PC-3 (cell line): ENCODE measurements at regions of chr1 and their contacts with region 1.

Region 1: DNA sequence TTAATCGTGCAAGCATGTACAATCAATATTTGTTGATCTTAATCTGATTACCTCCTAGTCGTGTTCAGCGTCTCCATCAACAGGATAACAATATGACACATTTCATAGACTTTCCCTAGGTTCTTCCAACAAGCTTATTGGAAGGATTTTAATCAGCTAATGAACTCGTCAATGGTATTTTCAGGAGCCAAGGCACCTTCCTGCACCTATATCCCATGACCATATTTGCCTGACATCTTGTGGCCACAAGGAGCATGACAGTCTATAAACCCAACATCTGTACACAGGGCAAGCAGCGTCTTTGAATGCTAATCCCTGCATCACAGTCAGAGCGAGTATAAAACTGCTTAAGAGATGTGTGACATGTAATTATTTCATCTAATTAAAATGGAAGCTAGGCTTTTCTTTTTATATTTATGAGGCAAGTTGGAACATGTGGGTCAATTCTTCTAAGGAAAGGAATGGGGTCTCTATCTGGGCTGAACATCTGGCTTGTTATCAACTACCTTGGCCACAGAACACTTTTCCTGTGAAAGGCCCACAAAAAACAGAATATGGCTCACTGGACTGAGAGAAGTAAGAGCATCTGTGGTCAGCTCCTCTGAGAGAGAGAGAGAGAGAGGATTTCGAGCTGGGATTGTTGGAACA is 388.8 kb downstream of the NTNG1 start:
- DNase-seq: peak; percentile 68
- ATAC-seq: peak; percentile 75
- H3K4me3 ChIP-seq: no peak overlapping the region
- H3K27ac ChIP-seq: peak overlapping the region; percentile 49
- H3K4me1 ChIP-seq: peaks cover 26% of the 10 kb centered on the region
- H3K27me3 ChIP-seq: no peaks in the 10 kb centered on the region
- CTCF ChIP-seq: peak; percentile 91

Region 2: GRCh38 chr1:107142140-107142542 is 387.5 kb before region 1 on chr1:
- CTCF ChIA-PET with region 1: interaction called, 10 read pairs
- POLR2A ChIA-PET with region 1: interaction called, 6 read pairs
- intact Hi-C with region 1: loop called (anchors 1 kb)
- DNase-seq: peak; percentile 82
- ATAC-seq: no peak; the same call in 1 of the 2 replicates
- H3K4me3 ChIP-seq: peak overlapping the region; percentile 80
- H3K27ac ChIP-seq: no peak overlapping the region
- H3K4me1 ChIP-seq: peaks cover 36% of the 10 kb centered on the region
- H3K27me3 ChIP-seq: no peaks in the 10 kb centered on the region
- CTCF ChIP-seq: peak; percentile 70

Region 3: GRCh38 chr1:107277022-107277421 is 252.6 kb before region 1 on chr1:
- CTCF ChIA-PET with region 1: no interaction called
- POLR2A ChIA-PET with region 1: no interaction called
- intact Hi-C with region 1: loop called (anchors 5 kb)
- DNase-seq: peak; percentile 65
- ATAC-seq: peak; percentile 37; the same call in 1 of the 2 replicates
- H3K4me3 ChIP-seq: no peak overlapping the region
- H3K27ac ChIP-seq: no peak overlapping the region
- H3K4me1 ChIP-seq: no peaks in the 10 kb centered on the region
- H3K27me3 ChIP-seq: no peaks in the 10 kb centered on the region
- CTCF ChIP-seq: peak; percentile 71

Region 4: GRCh38 chr1:107414560-107414959 is 115.1 kb before region 1 on chr1:
- CTCF ChIA-PET with region 1: no interaction called
- POLR2A ChIA-PET with region 1: no interaction called
- intact Hi-C with region 1: no loop called
- DNase-seq: peak; percentile 47
- ATAC-seq: peak; percentile 70
- H3K4me3 ChIP-seq: no peak overlapping the region
- H3K27ac ChIP-seq: no peak overlapping the region
- H3K4me1 ChIP-seq: peaks cover 11% of the 10 kb centered on the region
- H3K27me3 ChIP-seq: no peaks in the 10 kb centered on the region
- CTCF ChIP-seq: no peak

Region 5: GRCh38 chr1:107499139-107499744 is 30.4 kb before region 1 on chr1:
- CTCF ChIA-PET with region 1: no interaction called
- POLR2A ChIA-PET with region 1: no interaction called
- intact Hi-C with region 1: no loop called
- DNase-seq: no peak
- ATAC-seq: no peak
- H3K4me3 ChIP-seq: no peak overlapping the region
- H3K27ac ChIP-seq: no peak overlapping the region
- H3K4me1 ChIP-seq: peaks cover 5% of the 10 kb centered on the region; the same call in 1 of the 2 replicates
- H3K27me3 ChIP-seq: no peaks in the 10 kb centered on the region
- CTCF ChIP-seq: no peak

Region 6: DNA sequence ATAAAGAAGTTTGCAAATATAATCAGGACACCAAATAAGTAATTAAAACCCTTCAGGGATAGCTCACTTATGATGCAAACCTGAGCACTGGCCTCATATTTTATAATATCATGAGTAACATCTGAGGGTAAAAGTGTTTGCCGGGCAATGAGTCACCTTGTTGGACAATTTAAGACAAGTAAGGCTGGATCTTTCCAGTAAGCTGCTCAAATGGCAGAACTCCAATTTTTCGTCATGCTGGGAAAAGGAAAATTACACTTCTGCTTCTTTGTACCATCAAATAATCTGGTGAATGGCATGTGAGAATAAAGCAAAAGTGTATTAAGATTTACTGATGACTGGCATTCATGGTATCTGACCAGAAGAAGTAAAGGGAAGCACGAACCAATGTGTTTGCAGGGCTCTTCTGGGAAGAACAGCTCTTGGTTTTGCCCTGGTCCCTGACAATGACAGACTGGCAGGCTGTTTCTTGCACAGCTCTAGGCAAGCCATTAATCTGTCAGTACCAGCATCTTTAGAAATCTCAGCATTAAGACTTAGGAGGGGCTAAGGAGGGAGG is 43.1 kb after region 1 on chr1:
- CTCF ChIA-PET with region 1: no interaction called
- POLR2A ChIA-PET with region 1: no interaction called
- intact Hi-C with region 1: loop called (anchors 5 kb)
- DNase-seq: peak; percentile 92
- ATAC-seq: peak; percentile 98
- H3K4me3 ChIP-seq: peak overlapping the region; percentile 16; the same call in 1 of the 2 replicates
- H3K27ac ChIP-seq: peak overlapping the region; percentile 67
- H3K4me1 ChIP-seq: peaks cover 36% of the 10 kb centered on the region
- H3K27me3 ChIP-seq: no peaks in the 10 kb centered on the region
- CTCF ChIP-seq: no peak

Region 7: GRCh38 chr1:107688354-107688753 is 158.7 kb after region 1 on chr1:
- CTCF ChIA-PET with region 1: no interaction called
- POLR2A ChIA-PET with region 1: no interaction called
- intact Hi-C with region 1: loop called (anchors 1 kb)
- DNase-seq: peak; percentile 94
- ATAC-seq: peak; percentile 85
- H3K4me3 ChIP-seq: peak overlapping the region; percentile 22; the same call in 1 of the 2 replicates
- H3K27ac ChIP-seq: peak overlapping the region; percentile 88
- H3K4me1 ChIP-seq: peaks cover 63% of the 10 kb centered on the region
- H3K27me3 ChIP-seq: no peaks in the 10 kb centered on the region
- CTCF ChIP-seq: no peak

Region 8: DNA sequence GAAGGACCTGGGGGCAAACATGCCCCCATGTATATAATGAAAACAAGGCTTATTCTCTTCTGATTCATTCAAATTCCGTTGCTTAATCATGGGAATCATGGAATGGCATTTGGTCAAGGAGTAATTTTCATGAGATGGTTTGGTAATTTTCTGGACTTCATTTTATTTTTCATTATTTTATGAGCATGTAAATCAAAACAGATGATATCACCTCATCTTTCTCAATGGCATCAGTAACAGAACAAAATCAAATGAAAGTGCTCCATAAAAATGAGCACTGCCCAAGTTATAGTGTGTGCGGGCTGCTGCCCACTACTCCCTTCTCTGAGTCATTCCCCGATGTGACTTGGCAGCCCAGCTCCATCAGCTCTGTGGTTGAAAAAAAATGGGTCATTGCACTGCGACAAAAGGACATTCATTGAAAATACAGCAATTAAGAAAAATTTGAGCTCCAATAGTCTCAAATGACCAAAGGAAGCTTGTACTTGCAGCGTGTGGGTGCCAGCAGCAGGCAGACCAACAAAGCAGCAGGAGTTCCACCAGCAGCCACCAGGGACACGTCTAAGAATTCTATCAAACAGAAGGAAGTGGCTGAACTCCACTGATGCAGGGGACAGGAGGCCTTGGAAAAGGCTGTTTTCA is 519.7 kb after region 1 on chr1:
- CTCF ChIA-PET with region 1: no interaction called
- POLR2A ChIA-PET with region 1: no interaction called
- intact Hi-C with region 1: no loop called
- DNase-seq: peak; percentile 67
- ATAC-seq: peak; percentile 79
- H3K4me3 ChIP-seq: no peak overlapping the region
- H3K27ac ChIP-seq: no peak overlapping the region
- H3K4me1 ChIP-seq: peaks cover 27% of the 10 kb centered on the region
- H3K27me3 ChIP-seq: no peaks in the 10 kb centered on the region
- CTCF ChIP-seq: peak; percentile 65